ENCODE measurements at regions of chr6 and their contacts with region 1.

Region 1: GRCh38 chr6:498795-499231 is 107.3 kb downstream of the IRF4 start:
- DNase-seq: peak; percentile 83
- ATAC-seq: peak; percentile 79
- H3K4me3 Mint-ChIP-seq: peak overlapping the region; percentile 71
- H3K27ac Mint-ChIP-seq: peak overlapping the region; percentile 89
- H3K4me1 Mint-ChIP-seq: peaks cover 75% of the 10 kb centered on the region
- H3K27me3 Mint-ChIP-seq: no peaks in the 10 kb centered on the region

Region 2: GRCh38 chr6:436308-437036 is 62.3 kb before region 1 on chr6:
- CTCF ChIA-PET with region 1: interaction called, 7 read pairs
- POLR2A ChIA-PET with region 1: interaction called, 12 read pairs
- DNase-seq: no peak
- ATAC-seq: no peak
- H3K4me3 Mint-ChIP-seq: no peak overlapping the region
- H3K27ac Mint-ChIP-seq: peak overlapping the region; percentile 39
- H3K4me1 Mint-ChIP-seq: peaks cover 45% of the 10 kb centered on the region
- H3K27me3 Mint-ChIP-seq: peaks cover 2% of the 10 kb centered on the region

Region 3: DNA sequence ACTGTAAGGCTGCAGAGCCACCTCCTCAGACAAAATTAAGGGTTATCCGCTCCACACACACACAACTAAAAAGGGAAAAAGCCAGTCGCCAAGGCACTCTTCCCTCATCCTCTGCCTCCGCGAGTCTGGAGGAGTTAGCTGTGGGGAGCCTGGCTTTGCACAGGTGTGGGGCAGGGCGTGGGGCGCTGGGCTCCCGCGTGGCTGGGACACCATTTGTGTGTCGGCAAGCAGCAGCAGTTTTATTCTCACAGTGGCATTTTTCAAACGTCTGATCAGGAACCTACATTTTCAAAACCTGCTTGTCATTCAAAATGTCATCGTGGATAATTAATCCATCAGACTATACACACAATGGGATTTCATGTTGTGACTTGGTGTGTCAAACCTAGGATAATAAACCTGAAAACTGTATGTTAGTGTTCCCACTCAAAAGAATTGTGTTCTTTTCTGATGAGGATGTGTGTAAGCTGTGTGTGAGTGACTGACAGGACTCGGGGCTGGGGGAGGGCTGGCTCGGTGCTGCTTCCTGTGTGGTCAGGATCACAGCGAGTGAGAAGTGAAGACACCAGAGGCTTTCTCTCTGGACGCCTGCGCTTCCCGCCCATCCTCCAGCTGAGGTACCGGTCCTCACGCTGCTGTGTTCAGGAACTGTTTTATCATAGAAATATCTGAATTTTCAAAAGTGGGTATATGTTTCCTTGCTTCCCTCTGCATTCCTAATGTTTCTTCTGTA is 24.2 kb before region 1 on chr6:
- CTCF ChIA-PET with region 1: interaction called, 8 read pairs
- POLR2A ChIA-PET with region 1: interaction called, 13 read pairs
- DNase-seq: peak; percentile 93
- ATAC-seq: peak; percentile 100
- H3K4me3 Mint-ChIP-seq: peak overlapping the region; percentile 62
- H3K27ac Mint-ChIP-seq: peak overlapping the region; percentile 96
- H3K4me1 Mint-ChIP-seq: peaks cover 64% of the 10 kb centered on the region
- H3K27me3 Mint-ChIP-seq: no peaks in the 10 kb centered on the region